Calu3 (cell line): ENCODE measurements at regions of chr18 and their contacts with region 1.

Region 1: GRCh38 chr18:57214976-57215375 is 68.1 kb downstream of the BOD1L2 start:
- DNase-seq: no peak
- H3K4me3 Mint-ChIP-seq: no peak overlapping the region
- H3K27ac Mint-ChIP-seq: no peak overlapping the region
- H3K4me1 Mint-ChIP-seq: peaks cover 53% of the 10 kb centered on the region
- H3K27me3 Mint-ChIP-seq: no peaks in the 10 kb centered on the region
- CTCF ChIP-seq: no peak

Region 2: GRCh38 chr18:55534547-55534946 is 1680.4 kb before region 1 on chr18:
- CTCF ChIA-PET with region 1: no interaction called
- intact Hi-C with region 1: no loop called
- DNase-seq: no peak
- H3K4me3 Mint-ChIP-seq: no peak overlapping the region
- H3K27ac Mint-ChIP-seq: no peak overlapping the region
- H3K4me1 Mint-ChIP-seq: no peaks in the 10 kb centered on the region
- H3K27me3 Mint-ChIP-seq: no peaks in the 10 kb centered on the region
- CTCF ChIP-seq: no peak

Region 3: DNA sequence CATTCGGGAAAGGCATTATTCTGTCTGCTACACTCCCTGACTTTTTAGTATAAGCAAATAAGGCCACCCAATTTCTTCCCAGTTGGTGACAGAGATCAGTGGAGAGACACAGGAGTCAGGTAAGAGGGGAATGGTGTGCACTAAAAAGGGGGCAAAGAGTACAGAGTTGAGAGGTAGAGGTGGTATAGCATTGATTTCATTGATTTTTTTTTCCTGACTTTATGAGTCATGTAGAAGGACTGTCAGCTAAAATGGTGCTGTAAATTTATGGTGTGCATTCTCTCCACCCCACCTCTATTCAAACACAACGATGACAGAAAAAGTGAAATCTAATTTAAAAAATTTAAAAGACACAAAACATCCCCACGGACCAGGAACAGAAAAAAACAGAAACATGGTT is 113.7 kb after region 1 on chr18:
- CTCF ChIA-PET with region 1: interaction called, 10 read pairs
- intact Hi-C with region 1: no loop called
- DNase-seq: no peak
- H3K4me3 Mint-ChIP-seq: no peak overlapping the region
- H3K27ac Mint-ChIP-seq: no peak overlapping the region
- H3K4me1 Mint-ChIP-seq: peaks cover 18% of the 10 kb centered on the region
- H3K27me3 Mint-ChIP-seq: no peaks in the 10 kb centered on the region
- CTCF ChIP-seq: no peak

Region 4: GRCh38 chr18:57397440-57397839 is 182.5 kb after region 1 on chr18:
- CTCF ChIA-PET with region 1: interaction called, 10 read pairs
- intact Hi-C with region 1: no loop called
- DNase-seq: peak; percentile 38
- H3K4me3 Mint-ChIP-seq: no peak overlapping the region
- H3K27ac Mint-ChIP-seq: peak overlapping the region; percentile 10
- H3K4me1 Mint-ChIP-seq: peaks cover 12% of the 10 kb centered on the region
- H3K27me3 Mint-ChIP-seq: no peaks in the 10 kb centered on the region
- CTCF ChIP-seq: no peak